ENCODE measurements at regions of chr13 and their contacts with region 1.

Region 1: GRCh38 chr13:33542283-33543088 is 256.9 kb upstream of the STARD13 start:
- DNase-seq: peak; percentile 99
- ATAC-seq: peak; percentile 86
- H3K4me3 Mint-ChIP-seq: peak overlapping the region; percentile 82
- H3K27ac Mint-ChIP-seq: peak overlapping the region; percentile 99
- H3K4me1 Mint-ChIP-seq: peaks cover 55% of the 10 kb centered on the region
- H3K27me3 Mint-ChIP-seq: no peaks in the 10 kb centered on the region

Region 2: DNA sequence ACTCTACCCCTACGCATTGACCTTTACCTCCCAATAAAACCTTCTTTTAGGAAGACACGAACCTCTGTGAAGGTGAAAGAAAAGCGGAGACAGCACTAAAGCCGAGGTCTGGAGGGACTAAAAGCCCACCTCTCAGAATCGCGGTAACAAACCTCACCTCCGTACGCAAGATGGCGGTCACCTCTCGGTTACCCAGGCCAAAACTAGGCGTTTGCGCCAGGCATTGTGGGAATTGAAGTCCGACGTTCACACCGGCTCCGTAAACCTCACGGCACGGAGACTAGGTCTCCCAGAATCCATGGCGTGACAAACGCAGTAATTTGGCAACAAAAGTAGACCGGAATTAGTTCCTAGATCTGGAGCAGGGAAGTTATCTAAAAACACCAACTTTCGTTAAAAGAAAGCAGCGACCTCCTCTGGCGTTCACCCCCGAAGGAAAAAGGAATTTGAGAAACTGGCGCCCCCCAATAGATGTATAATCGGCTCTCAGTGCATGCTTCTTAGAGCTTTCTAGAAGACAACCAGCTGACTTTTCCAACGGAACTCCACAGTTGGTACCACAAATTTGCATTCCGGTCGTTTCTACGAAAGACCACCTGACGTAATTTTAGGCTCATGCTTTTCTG is 1003.8 kb before region 1 on chr13 and contains the start of gene N4BP2L2:
- CTCF ChIA-PET with region 1: no interaction called
- POLR2A ChIA-PET with region 1: interaction called, 4 read pairs
- intact Hi-C with region 1: loop called (anchors 1 kb)
- DNase-seq: peak; percentile 94
- ATAC-seq: peak; percentile 96
- H3K4me3 Mint-ChIP-seq: peak within 1 kb of the TSS; percentile 93
- H3K27ac Mint-ChIP-seq: peak within 1 kb of the TSS; percentile 98
- H3K4me1 Mint-ChIP-seq: peaks cover 39% of the 10 kb centered on the region
- H3K27me3 Mint-ChIP-seq: peaks cover 4% of the 10 kb centered on the region
- total RNA-seq, gene N4BP2L2: 95.1 to 105 TPM

Region 3: GRCh38 chr13:32905063-32905863 is 637.2 kb before region 1 on chr13:
- CTCF ChIA-PET with region 1: no interaction called
- POLR2A ChIA-PET with region 1: no interaction called
- intact Hi-C with region 1: loop called in 1 of 2 experiments (anchors 1 kb)
- DNase-seq: peak; percentile 39
- ATAC-seq: peak; percentile 95
- H3K4me3 Mint-ChIP-seq: peak overlapping the region; percentile 15
- H3K27ac Mint-ChIP-seq: peak overlapping the region; percentile 90
- H3K4me1 Mint-ChIP-seq: peaks cover 17% of the 10 kb centered on the region
- H3K27me3 Mint-ChIP-seq: peaks cover 4% of the 10 kb centered on the region

Region 4: GRCh38 chr13:33146843-33147611 is 395.5 kb before region 1 on chr13:
- CTCF ChIA-PET with region 1: no interaction called
- POLR2A ChIA-PET with region 1: no interaction called
- intact Hi-C with region 1: loop called in 1 of 2 experiments (anchors 2 kb)
- DNase-seq: peak; percentile 24
- ATAC-seq: peak; percentile 80
- H3K4me3 Mint-ChIP-seq: no peak overlapping the region
- H3K27ac Mint-ChIP-seq: no peak overlapping the region
- H3K4me1 Mint-ChIP-seq: peaks cover 21% of the 10 kb centered on the region
- H3K27me3 Mint-ChIP-seq: peaks cover 32% of the 10 kb centered on the region

Region 5: DNA sequence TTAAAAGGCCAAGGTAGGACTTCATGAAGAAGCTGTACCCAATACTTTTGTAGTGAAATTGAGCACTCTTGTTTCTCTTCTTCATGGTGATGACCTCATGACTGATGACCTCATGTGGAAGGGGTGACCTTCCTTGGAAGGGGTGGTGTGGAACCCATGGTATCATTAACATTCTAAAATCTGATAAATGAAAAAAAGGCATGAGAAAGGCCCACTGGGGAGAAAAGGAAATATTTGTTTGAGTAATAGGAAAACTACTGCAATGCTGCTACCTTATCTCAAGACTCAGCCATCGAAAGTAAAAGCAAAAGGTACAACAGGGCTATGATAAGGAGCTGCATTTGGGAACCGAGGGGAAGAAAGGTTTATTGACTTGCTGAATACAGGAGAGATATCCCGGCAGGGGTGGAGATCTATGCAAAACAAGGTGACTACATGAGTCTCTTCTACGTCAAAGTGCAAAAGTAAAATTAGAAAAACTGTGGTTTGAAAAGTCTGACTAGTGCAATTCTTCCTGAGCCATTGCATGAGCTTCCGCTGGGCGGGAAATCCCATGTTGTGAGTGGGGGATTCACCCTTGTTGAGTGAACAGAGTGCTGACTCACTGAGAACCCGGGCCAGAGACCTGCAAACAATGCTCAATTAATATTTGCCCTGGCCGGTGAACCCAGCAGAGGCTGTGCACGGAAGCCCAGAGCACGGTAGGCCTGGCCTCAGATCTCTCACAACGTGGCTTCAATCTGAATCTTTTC is 136.6 kb after region 1 on chr13:
- CTCF ChIA-PET with region 1: interaction called, 8 read pairs
- POLR2A ChIA-PET with region 1: no interaction called
- intact Hi-C with region 1: loop called (anchors 1 kb)
- DNase-seq: peak; percentile 91
- ATAC-seq: peak; percentile 90
- H3K4me3 Mint-ChIP-seq: peak overlapping the region; percentile 64
- H3K27ac Mint-ChIP-seq: peak overlapping the region; percentile 89
- H3K4me1 Mint-ChIP-seq: peaks cover 37% of the 10 kb centered on the region
- H3K27me3 Mint-ChIP-seq: no peaks in the 10 kb centered on the region

Region 6: GRCh38 chr13:35164324-35164932 is 1621.9 kb after region 1 on chr13:
- CTCF ChIA-PET with region 1: no interaction called
- POLR2A ChIA-PET with region 1: no interaction called
- intact Hi-C with region 1: loop called in 1 of 2 experiments (anchors 5 kb)
- DNase-seq: no peak
- ATAC-seq: peak; percentile 55
- H3K4me3 Mint-ChIP-seq: no peak overlapping the region
- H3K27ac Mint-ChIP-seq: no peak overlapping the region
- H3K4me1 Mint-ChIP-seq: peaks cover 7% of the 10 kb centered on the region
- H3K27me3 Mint-ChIP-seq: no peaks in the 10 kb centered on the region

Measured in activated CD4-positive, alpha-beta T cell treated with anti-CD3 and anti-CD28 coated beads for 36 hours (primary cell).